ENCODE measurements at regions of chr10 and their contacts with region 1.

Region 1: DNA sequence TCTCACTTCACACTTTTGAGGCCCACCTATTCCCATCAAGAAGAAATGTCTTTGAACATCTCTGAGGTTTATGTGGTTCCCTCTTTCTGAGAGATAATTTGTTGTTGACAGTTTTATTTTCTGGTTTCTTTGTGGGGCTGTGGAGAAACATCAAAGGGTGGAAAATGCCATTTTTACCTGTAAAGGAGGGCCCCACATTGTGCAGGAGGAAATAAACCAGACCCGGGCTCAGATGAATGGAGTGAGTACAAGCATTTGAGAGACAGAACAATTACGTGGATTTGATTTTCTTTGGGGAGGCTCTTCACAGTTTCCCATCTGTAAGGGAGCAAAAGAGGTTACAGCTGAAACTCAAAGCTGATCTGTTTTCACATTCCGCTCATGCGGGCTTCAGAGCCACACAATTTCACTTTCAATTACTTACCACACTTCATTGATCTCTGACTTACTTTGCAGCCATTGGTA is 29.8 kb downstream of the ITPRIP start:
- DNase-seq: no peak
- H3K27ac ChIP-seq: no peak overlapping the region
- CTCF ChIP-seq: no peak

Region 2: GRCh38 chr10:104296687-104297436 is 11.6 kb before region 1 on chr10:
- CTCF ChIA-PET with region 1: interaction called, 42 read pairs
- POLR2A ChIA-PET with region 1: no interaction called
- DNase-seq: no peak
- H3K27ac ChIP-seq: peak overlapping the region; percentile 20; the same call in 1 of the 2 replicates
- CTCF ChIP-seq: no peak

Region 3: GRCh38 chr10:104322416-104322782 is 13.9 kb after region 1 on chr10:
- CTCF ChIA-PET with region 1: interaction called, 14 read pairs
- POLR2A ChIA-PET with region 1: interaction called, 3 read pairs
- DNase-seq: peak; percentile 83
- H3K27ac ChIP-seq: peak overlapping the region; percentile 99
- CTCF ChIP-seq: no peak

Measured in RWPE1 (cell line).